ENCODE measurements at regions of chr17 and their contacts with region 1.

Region 1: DNA sequence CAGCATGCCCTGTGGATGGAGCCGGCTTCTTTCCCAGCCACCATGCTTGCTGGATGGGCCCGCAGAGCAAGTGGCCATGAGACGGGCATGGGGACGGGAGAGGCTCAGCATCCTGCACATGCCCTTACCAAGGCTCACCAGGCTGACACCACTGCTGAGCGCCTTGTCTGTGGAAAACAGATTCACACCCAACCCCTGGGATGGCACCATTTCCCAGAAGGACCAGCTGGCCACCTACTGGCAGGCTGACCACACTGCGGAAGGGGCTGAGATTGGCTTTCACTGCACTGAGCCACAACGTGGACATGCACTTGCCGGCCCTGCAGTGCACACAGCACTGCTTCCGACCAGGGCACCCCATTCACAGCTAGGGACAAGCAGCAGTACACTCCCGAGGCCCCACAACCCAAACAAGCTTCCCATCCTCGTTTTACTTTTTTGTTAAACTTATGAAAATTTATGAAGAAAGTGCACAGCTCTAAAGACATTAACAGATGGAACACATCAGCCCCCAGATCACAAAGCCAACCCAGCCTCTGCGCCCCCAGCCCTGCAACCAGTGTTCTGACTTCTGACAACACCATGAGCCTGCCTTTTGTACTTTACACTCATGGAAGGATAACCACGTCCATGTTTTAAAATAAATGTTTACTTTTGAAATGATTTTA is 13.9 kb upstream of the KRTAP17-1 start:
- H3K4me3 ChIP-seq: no peak overlapping the region
- H3K27ac ChIP-seq: no peak overlapping the region
- H3K4me1 ChIP-seq: no peaks in the 10 kb centered on the region
- CTCF ChIP-seq: peak; percentile 82

Region 2: DNA sequence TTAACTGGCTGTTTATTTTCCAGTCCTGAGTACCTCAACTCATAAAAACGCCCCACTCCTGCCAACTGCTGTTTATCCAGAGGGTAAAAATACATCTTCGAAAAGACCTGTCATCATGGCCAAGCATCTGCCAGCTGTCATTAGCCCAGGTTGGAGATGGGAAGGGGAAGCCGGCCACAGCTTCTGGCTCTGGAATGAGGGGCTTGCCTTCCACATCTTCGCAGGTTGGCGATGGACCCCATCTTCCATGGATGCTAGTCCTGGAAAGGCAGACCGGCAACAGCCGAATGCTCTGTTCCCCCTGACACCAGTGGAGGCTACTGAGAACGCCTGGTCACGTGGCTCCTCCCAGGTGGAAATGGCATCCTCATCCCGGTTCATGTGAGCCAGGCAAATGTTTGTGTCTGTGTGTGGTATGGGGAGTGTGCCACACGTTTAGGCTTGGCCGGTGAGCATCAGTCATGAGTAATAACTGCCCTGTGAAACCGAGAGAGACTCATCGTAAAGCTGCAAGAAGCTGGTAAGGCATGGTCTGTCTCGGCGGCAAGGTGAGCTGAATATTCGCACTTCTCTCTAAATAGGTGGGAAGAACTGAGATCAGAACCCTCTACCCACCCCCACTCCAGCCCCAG is 13.5 kb before region 1 on chr17:
- CTCF ChIA-PET with region 1: interaction called, 19 read pairs
- POLR2A ChIA-PET with region 1: no interaction called
- H3K4me3 ChIP-seq: no peak overlapping the region
- H3K27ac ChIP-seq: no peak overlapping the region
- H3K4me1 ChIP-seq: no peaks in the 10 kb centered on the region
- CTCF ChIP-seq: no peak

Region 3: DNA sequence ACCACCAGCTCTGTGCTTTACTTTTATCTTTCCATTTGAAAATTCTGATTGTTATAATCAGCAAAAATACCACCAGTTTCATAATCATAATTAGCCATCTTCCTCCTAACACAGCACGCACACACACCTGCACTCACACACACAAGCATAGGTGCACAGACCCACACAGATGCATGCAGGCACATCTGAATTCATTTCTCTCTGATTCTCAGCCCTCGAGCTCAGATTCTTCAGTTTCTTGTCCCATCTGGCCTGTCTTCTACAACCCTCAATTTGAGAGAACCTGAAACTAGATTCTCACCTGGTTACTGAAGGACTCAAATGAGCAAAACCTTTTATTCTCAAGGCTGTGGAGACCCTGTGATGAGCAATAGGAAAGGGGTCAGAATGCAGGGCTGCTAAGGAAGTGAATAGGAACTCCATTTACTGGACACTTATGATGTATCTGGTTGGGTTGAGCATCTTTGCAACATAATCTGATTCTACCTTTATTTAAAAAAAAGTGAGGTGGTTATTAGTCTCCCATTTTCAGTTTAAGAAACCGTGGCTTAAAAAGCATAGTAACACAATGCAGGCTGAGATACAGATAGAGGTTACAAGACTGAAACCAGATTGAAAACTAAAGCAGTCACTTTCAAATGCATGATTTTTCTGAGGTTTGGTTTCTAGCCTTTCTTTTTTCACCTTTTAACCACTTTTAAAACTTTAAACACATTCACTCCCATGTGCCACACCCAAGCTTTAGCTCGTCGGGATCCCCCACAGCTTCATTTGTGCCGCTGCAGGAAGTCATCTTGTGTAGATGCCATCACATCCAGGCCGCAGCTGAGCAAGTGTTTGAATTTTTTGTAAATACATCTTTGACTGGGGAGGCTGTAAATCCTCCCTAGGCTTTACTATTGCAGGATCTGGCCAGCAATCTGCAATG is 11.8 kb after region 1 on chr17:
- CTCF ChIA-PET with region 1: interaction called, 16 read pairs
- POLR2A ChIA-PET with region 1: no interaction called
- H3K4me3 ChIP-seq: no peak overlapping the region
- H3K27ac ChIP-seq: no peak overlapping the region
- H3K4me1 ChIP-seq: no peaks in the 10 kb centered on the region
- CTCF ChIP-seq: no peak

Region 4: GRCh38 chr17:41486809-41487720 is 157.7 kb after region 1 on chr17:
- CTCF ChIA-PET with region 1: no interaction called
- POLR2A ChIA-PET with region 1: no interaction called
- H3K4me3 ChIP-seq: no peak overlapping the region
- H3K27ac ChIP-seq: no peak overlapping the region
- H3K4me1 ChIP-seq: no peaks in the 10 kb centered on the region
- CTCF ChIP-seq: 0 out of 2 replicates have a peak, but pooled peaks have one; percentile 17